PC-9 (cell line): ENCODE measurements at regions of chr5 and their contacts with region 1.

Region 1: GRCh38 chr5:132007399-132008165 is 3.9 kb downstream of the ACSL6 start:
- DNase-seq: peak; percentile 54 to 64
- H3K4me3 ChIP-seq: no peak overlapping the region
- H3K27ac ChIP-seq: no peak overlapping the region
- H3K4me1 ChIP-seq: 0 out of 2 replicates have a peak, but pooled peaks cover under 1% of the 10 kb centered on the region
- H3K27me3 ChIP-seq: peaks cover 27% of the 10 kb centered on the region
- CTCF ChIP-seq: peak; percentile 79

Region 2: DNA sequence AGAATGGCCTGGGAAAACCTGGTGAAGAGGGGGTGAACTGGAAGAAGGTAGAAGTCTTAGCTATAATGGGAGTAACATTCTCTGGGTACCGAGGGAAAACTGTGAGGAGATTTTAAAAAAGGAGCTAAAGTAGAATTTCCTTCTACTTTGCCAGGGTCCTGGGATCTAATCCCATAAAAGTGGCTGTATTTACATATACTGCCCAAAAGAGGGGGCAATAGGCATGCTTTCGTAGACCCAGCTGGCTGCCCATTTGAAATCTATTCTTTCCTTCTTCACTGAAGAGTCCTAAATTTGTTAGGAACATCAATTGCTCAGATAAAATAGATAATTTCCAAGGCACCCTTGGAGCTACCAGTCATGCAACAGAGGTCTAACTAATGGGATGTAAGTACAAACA is 584.5 kb before region 1 on chr5:
- CTCF ChIA-PET with region 1: no interaction called
- POLR2A ChIA-PET with region 1: no interaction called
- intact Hi-C with region 1: loop called (anchors 5 kb)
- DNase-seq: no peak
- H3K4me3 ChIP-seq: no peak overlapping the region
- H3K27ac ChIP-seq: no peak overlapping the region
- H3K4me1 ChIP-seq: no peaks in the 10 kb centered on the region
- H3K27me3 ChIP-seq: no peaks in the 10 kb centered on the region
- CTCF ChIP-seq: peak; percentile 57; the same call in 1 of the 2 replicates

Region 3: DNA sequence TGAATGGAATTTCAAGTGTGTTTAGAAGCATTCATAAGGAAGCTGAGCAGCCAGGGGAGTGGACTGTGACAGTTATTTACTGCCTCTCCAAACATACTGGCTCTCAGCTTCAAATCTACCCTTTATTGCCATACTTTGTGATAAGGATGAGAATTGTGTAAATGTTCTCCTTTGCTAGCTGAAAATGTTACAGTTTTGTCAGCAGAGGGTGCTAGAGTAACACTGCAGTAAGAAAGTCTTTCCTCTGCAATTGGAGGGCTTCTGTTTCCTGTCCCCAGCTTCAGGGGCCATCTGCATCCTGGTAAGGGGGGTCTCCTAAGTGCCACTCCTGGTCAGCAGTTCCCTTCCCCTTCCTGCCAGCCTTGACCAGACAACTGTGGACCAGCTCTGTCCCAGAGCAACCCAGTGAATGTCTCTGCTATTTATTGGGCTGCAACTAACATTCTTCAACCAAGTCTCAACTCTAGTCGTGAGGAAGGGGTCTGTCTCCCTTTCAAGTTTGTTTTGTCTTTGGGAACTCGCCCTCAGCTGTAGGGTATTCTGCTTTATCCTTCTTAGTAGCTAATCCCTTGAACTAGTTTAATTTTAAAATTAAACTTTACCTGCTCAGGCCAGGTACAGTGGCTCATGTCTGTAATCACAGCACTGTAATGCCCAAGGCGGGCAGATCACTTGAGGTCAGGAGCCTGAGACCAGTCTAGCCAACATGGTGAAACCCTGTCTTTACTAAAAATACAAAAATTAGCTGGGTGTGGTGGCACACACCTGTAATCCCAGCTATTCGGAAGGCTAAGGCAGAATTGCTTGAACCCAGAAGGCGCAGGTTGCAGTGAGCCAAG is 417.9 kb before region 1 on chr5:
- CTCF ChIA-PET with region 1: interaction called, 10 read pairs
- POLR2A ChIA-PET with region 1: no interaction called
- intact Hi-C with region 1: loop called (anchors 1 kb)
- DNase-seq: peak in 1 of 2 experiments; percentile 13
- H3K4me3 ChIP-seq: no peak overlapping the region
- H3K27ac ChIP-seq: no peak overlapping the region
- H3K4me1 ChIP-seq: no peaks in the 10 kb centered on the region
- H3K27me3 ChIP-seq: no peaks in the 10 kb centered on the region
- CTCF ChIP-seq: peak; percentile 86

Region 4: DNA sequence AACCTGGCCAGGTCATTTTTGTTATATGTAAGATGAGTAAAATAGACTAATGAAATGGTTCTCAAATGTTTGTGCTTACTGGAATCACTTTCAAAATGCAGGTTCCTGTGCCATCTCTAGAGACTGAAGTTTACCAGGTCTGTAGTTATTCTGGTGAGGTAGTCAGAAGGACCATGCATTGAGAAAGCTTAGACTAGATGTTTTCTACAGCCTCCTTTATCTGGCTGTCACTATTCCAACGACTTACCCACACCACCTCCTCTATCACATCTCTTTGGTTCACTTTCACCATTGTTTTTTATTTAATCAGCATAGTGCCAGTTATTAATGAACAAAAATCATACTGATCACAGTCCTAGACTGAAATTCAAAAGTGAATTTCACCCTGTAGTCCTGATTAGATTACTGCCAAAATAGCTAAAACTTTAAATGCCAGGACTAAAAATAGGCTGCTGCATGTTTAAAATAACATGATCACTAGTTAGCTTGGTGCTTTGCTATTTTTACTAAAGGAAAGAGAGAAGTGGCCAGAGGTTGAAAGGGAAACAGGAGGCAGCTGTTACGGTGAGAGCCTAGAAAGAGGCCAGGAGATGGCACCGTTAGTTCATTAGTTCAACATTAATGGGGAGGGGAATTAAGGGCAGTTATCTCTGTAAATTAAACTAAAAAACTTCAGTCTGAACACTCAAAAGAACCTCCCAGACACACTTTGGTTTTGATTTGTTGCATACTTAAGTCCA is 196.9 kb before region 1 on chr5:
- CTCF ChIA-PET with region 1: interaction called, 10 read pairs
- POLR2A ChIA-PET with region 1: no interaction called
- intact Hi-C with region 1: loop called (anchors 1 kb)
- DNase-seq: no peak
- H3K4me3 ChIP-seq: no peak overlapping the region
- H3K27ac ChIP-seq: no peak overlapping the region
- H3K4me1 ChIP-seq: peaks cover 8% of the 10 kb centered on the region; the same call in 1 of the 2 replicates
- H3K27me3 ChIP-seq: no peaks in the 10 kb centered on the region
- CTCF ChIP-seq: peak; percentile 39